Colonic mucosa (tissue), 4 donors: ENCODE measurements at regions of chr20 and their contacts with region 1.

Region 1: DNA sequence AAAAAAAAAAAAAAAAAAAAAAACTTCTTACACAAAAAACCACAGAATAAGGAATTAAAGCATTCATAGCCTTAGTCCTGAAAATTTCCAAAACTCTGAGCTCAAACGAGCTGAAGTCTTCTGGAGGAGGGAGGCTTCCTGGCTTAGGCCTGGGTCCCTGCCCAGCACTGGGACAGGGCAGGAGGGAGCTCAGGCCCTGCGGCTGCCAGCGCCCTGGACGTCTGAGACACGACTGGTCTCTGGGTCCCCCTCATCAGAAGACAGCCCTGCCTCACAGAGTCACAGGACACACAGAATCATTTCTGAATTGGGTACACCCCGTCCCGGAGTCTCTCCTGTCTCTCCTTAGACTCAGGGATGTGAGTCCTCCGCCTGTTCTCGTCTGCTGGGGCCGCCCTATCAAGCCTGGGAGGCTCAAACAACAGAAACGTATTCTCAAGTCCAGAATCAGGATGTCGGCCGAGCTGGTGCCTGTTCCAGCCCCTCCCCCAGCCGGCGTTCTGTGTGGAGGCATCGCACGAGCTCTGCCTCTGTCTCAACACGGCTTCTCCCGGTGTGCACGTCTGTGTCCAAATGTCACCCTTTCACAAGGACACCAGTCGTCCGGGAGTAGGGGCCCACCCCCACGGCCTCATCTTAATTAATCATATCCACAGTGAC is 39.4 kb downstream of the ZBTB46 start:
- DNase-seq: no peak
- H3K4me3 ChIP-seq: no peak overlapping the region
- H3K27ac ChIP-seq: no peak overlapping the region
- H3K4me1 ChIP-seq: no peaks in the 10 kb centered on the region
- H3K27me3 ChIP-seq: no peaks in the 10 kb centered on the region
- CTCF ChIP-seq: no peak

Region 2: GRCh38 chr20:63707549-63708300 is 83.9 kb before region 1 on chr20 and contains the starts of genes ARFRP1 and ZGPAT:
- intact Hi-C with region 1: loop called (anchors 10 kb)
- DNase-seq: peak; percentile 94
- H3K4me3 ChIP-seq: peak within 1 kb of the TSS; percentile 99
- H3K27ac ChIP-seq: peak within 1 kb of the TSS; percentile 91
- H3K4me1 ChIP-seq: peaks cover 22% of the 10 kb centered on the region
- H3K27me3 ChIP-seq: no peaks in the 10 kb centered on the region
- CTCF ChIP-seq: no peak
- total RNA-seq, gene ARFRP1: 35.3 to 76.9 TPM
- total RNA-seq, gene ZGPAT: 27.2 to 41.4 TPM

Region 3: DNA sequence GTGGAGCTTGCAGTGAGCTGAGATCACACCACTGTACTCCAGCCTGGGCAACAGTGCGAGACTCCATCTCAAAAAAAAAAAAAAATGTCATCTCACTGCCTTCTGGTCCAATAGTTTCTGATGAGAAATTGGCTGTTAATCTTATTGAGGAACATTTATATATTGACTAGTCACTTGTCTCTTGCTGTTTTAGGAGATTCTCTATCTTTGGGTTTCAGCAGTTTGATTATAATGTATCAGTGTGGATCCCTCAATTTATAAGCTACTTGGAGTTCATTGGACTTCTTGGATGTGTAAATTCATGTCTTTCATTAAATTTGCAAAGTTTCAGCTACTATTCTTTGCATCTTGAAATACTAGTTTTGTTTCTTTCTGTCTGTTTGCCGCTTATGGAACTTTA is 72.6 kb before region 1 on chr20:
- intact Hi-C with region 1: no loop called
- DNase-seq: no peak
- H3K4me3 ChIP-seq: no peak overlapping the region
- H3K27ac ChIP-seq: no peak overlapping the region
- H3K4me1 ChIP-seq: no peaks in the 10 kb centered on the region
- H3K27me3 ChIP-seq: no peaks in the 10 kb centered on the region
- CTCF ChIP-seq: no peak